ENCODE measurements at regions of chr1 and their contacts with region 1.

Region 1: DNA sequence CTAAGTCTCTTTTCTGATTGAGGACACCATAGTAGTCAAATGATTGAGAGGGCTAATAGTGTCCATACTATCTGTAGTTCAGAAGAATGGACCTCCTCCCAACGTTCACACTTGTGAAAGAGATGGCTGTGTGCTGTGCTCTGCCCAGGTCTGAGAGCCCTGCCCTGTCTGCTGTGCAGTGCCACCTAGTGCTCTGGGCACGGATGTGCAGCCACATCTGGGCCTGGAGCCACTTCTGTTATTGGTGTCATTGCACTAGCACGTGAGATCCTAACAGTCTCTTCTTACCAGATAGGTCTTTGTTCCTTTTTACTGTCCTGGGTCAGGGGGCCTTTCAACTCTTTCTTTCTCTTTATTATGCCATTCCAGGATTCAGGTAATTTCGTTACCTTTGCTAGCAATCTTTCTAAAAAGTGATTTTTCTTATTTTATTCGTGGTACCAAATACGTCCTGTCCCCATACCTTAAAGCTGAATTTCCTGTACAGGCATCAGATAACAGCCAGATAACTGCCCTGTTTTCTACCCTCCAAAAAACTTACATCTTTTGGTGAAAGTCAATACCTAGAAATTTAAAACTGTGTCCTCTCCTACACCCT is 21.7 kb downstream of the INTS3 start:
- DNase-seq: peak; percentile 77 to 87 (median 84)
- H3K4me3 ChIP-seq: no peak overlapping the region
- H3K27ac ChIP-seq: no peak overlapping the region
- H3K4me1 ChIP-seq: peaks cover 0 to 3% (median 0%) of the 10 kb centered on the region in 4 experiments
- H3K27me3 ChIP-seq: no peaks in the 10 kb centered on the region

Region 2: DNA sequence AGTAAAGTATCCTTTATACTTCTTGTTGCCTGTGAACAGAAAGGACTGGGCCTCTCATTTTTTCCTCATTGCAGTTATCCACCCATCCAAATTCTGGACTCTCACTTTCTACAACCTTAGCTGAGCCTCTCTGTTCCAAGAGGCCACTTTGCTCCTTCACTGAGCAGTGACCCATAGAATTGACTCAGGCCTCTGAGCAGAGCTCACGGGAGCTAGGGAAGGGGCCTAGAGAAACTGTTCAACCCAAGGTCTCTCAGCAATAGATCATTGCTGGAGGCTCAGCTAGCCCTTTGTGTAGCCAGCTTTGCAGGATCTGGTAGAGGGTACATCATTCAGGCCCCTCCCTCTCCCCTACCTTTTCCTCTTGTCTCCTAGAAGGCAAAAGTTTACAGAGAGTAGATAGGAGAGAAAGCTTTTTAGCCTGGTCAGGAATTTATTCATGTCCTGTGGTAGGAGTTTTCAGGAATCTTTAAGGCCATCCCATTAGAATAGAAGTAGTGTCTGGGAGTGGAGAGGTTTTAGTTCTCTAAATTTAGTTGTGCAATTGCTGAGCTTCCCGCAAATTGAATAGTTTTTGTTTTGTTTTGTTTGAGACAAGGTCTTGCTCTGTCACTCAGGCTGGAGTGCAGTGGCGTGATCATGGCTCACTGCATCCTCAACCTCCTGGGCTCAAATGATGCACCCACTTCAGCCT is 15.0 kb before region 1 on chr1:
- CTCF ChIA-PET with region 1: interaction called, 12 read pairs
- POLR2A ChIA-PET with region 1: interaction called, 3 read pairs
- DNase-seq: no peak
- H3K4me3 ChIP-seq: no peak overlapping the region
- H3K27ac ChIP-seq: no peak overlapping the region
- H3K4me1 ChIP-seq: peaks cover 0 to 3% (median under 1%) of the 10 kb centered on the region in 4 experiments
- H3K27me3 ChIP-seq: no peaks in the 10 kb centered on the region

Region 3: DNA sequence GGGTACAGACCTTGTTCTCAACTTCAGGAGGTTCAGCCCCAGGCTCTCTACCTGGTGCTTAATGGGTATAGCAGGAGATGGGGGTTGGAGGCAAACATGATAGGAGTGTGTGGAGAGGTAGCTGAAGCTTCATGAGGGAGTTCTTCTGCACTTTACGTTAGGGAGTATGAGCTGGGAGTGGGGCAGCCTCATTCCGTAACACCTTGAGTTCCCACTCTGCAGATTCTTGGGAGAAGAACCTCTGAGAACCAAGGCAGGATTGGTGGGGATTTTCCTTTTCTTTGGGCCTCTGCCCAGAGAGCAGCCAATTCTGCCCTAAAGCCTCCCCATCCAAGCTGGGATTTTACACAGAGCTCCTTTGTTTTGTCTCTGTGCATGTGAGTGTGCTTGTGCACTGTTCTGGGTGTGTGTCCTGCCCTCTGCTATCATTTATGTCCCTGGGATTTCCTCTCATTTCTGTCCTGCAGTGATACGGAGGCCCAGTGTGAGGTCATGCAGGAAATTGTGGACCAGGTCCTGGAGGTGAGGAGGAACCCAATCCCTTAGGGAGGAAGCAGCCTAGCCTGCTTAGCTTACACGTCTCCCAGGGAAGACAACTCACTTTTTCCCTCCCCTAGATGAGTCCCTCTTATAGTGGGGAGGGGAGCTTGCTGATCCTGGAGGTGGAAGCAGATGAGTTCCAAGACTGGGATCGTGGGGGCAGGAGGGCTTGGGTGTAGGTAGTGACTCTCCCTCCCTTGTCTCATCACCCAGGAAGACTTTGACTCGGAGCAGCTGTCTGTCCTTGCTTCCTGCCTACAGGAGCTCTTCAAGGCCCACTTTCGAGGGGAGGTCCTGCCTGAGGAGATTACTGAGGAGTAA is 14.1 kb after region 1 on chr1:
- CTCF ChIA-PET with region 1: interaction called, 10 read pairs
- POLR2A ChIA-PET with region 1: no interaction called
- DNase-seq: no peak
- H3K4me3 ChIP-seq: no peak overlapping the region
- H3K27ac ChIP-seq: no peak overlapping the region
- H3K4me1 ChIP-seq: no peaks in the 10 kb centered on the region
- H3K27me3 ChIP-seq: no peaks in the 10 kb centered on the region